ENCODE measurements at regions of chr6 and their contacts with region 1.

Region 1: DNA sequence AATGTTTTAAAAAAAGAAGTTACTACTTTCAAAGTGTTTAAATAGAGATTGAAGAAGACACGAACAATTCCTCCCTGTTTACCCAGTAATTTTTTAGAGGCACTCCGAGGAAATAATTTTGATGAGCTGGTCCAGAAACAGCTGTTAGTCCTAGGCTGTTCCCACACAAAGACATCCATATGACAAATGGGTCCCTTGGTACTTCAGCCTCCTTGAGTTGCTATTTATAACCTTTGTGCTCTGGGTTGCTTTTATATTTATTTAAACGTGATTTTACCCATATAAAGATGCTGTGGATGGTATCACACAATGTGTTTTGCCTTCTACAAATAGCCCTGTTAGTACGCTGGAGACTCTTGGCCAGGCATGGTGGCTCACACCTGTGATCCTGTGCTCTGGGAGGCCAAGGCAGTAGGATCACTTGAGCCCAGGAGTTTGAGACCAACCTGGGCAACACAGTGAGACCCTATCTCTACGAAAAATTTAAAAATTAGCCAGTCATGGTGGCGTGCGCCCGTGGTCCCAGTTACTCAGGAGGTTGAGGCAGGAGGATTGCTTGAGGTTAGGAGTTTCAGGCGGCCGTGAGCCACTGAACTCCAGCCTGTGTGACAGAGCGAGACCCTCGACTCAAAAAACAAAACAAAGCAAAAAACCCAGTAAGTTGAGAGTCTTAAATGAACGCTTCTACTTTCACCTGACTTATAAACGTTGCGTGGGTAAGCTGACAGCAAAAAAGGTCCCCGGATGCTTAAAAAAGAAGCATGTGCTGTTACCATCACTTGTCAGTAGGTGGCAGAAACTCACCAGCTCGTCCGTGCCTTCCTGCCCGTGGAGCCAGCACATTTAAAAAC is 56.9 kb upstream of the ARMH2 start:
- DNase-seq: peak; percentile 54
- H3K4me3 ChIP-seq: no peak overlapping the region
- H3K27ac ChIP-seq: no peak overlapping the region
- H3K4me1 ChIP-seq: peaks cover 25% of the 10 kb centered on the region
- H3K27me3 ChIP-seq: no peaks in the 10 kb centered on the region
- CTCF ChIP-seq: peak; percentile 75 to 86

Region 2: DNA sequence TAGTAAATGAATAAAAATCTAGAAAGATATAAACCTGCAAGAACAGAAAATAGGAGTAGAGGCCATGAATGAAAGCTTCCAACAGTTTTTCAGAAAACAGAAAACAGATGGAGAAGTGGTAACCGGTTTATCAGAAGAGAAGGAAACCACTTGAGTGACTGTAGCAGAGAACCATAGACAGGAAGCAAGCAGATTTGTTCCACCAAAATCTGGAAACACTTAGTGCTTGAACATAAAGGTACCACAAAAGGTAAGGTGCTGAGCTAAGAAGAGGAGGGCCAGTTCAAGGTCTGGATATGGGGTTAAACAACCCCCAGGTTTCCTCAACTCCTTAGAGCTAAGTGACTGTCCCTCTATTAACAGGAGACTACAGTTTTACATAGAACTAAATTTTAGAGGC is 200.4 kb before region 1 on chr6:
- CTCF ChIA-PET with region 1: no interaction called
- dilution Hi-C with region 1: no loop called
- in situ Hi-C with region 1: no loop called
- intact Hi-C with region 1: no loop called
- DNase-seq: no peak
- H3K4me3 ChIP-seq: no peak overlapping the region
- H3K27ac ChIP-seq: no peak overlapping the region
- H3K4me1 ChIP-seq: no peaks in the 10 kb centered on the region
- H3K27me3 ChIP-seq: no peaks in the 10 kb centered on the region
- CTCF ChIP-seq: no peak

Region 3: DNA sequence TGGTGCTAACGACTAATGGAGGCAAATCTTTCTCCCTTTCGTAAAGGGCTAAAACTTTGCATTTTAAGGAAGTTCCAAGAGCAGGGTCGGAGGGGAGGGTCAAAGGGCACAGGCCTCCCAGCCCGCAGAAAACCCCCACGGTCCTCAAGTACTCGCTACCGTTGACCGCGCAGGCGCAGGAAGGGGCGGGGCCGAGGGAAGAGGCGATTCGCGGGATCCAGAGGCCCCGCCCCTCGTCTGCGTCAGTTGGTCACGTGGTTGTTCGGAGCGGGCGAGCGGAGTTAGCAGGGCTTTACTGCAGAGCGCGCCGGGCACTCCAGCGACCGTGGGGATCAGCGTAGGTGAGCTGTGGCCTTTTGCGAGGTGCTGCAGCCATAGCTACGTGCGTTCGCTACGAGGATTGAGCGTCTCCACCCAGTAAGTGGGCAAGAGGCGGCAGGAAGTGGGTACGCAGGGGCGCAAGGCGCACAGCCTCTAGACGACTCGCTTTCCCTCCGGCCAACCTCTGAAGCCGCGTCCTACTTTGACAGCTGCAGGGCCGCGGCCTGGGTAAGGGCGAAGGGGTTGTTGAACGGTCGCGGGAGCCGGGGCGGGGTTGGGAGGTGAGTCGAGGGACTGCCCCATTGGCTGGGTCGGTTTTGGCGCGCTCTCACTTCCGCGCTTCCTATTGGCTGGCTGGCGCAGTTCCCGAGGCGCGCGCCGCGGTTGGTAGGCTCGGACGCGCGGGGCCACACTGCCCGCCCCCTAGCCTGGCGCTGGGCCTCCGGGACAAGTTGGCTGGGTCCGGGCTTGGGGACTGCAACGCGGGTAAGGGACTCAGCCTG is 80.7 kb before region 1 on chr6 and contains the start of gene GMNN:
- CTCF ChIA-PET with region 1: no interaction called
- dilution Hi-C with region 1: no loop called
- in situ Hi-C with region 1: no loop called
- intact Hi-C with region 1: loop called (anchors 2 kb)
- DNase-seq: peak; percentile 93
- H3K4me3 ChIP-seq: peak within 1 kb of the TSS; percentile 74 to 100 (median 100)
- H3K27ac ChIP-seq: peak within 1 kb of the TSS; percentile 93
- H3K4me1 ChIP-seq: peaks cover 5% of the 10 kb centered on the region
- H3K27me3 ChIP-seq: no peaks in the 10 kb centered on the region
- CTCF ChIP-seq: no peak
- total RNA-seq, gene GMNN: 8.0 to 36.3 TPM

Region 4: GRCh38 chr6:24902782-24903181 is 47.2 kb after region 1 on chr6:
- CTCF ChIA-PET with region 1: no interaction called
- dilution Hi-C with region 1: no loop called
- in situ Hi-C with region 1: no loop called
- intact Hi-C with region 1: no loop called
- DNase-seq: peak; percentile 41
- H3K4me3 ChIP-seq: no peak overlapping the region
- H3K27ac ChIP-seq: no peak overlapping the region
- H3K4me1 ChIP-seq: no peaks in the 10 kb centered on the region
- H3K27me3 ChIP-seq: no peaks in the 10 kb centered on the region
- CTCF ChIP-seq: no peak

Region 5: GRCh38 chr6:24933868-24934401 is 78.3 kb after region 1 on chr6:
- CTCF ChIA-PET with region 1: no interaction called
- dilution Hi-C with region 1: no loop called
- in situ Hi-C with region 1: no loop called
- intact Hi-C with region 1: loop called (anchors 1 kb)
- DNase-seq: no peak
- H3K4me3 ChIP-seq: no peak overlapping the region
- H3K27ac ChIP-seq: no peak overlapping the region
- H3K4me1 ChIP-seq: no peaks in the 10 kb centered on the region
- H3K27me3 ChIP-seq: no peaks in the 10 kb centered on the region
- CTCF ChIP-seq: peak; percentile 25 to 49

Region 6: DNA sequence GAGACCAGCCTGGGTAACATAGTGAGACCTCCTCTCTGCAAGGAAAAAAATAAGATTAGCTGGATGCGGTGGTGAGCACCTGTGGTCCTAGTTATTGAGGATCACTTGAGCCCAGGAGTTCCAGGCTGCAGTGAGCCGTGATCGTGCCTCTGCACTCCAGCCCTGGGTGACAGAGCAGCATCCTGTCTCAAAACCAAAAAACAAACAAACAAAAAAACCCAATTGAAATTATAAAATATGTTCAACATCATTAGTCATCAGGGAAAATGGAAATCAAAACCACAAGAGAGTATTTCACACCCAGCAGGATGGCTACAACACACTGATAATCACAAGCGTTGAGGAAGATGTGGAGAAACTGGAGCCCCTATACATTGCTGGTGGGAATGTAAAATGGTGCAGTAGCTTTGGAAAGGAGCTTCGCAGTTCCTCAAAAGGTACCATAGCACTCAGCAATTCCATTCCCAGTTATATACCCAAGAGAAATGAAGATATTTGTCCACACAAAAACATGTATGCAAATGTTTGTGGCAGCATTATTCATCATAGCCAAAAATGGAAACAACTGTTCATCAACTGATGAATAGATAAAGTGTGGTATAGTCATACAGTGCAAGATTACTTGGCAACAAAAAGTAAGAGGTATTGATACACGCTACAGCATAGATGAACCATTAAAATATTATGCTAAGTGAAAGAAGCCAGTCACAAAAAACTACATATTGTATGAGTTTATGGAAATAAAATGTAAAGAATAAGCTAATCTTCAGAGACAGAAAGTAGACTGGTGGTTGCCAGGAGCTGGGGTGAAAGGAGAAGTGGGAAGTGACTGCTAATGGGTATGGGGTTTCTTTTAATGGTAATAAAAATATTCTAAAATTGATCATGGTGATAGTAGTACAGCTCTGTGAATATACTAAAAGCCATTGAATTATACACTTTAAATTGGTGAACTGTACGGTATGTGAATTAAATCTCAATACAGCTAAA is 118.9 kb after region 1 on chr6:
- CTCF ChIA-PET with region 1: no interaction called
- dilution Hi-C with region 1: no loop called
- in situ Hi-C with region 1: no loop called
- intact Hi-C with region 1: no loop called
- DNase-seq: peak; percentile 25
- H3K4me3 ChIP-seq: no peak overlapping the region
- H3K27ac ChIP-seq: no peak overlapping the region
- H3K4me1 ChIP-seq: no peaks in the 10 kb centered on the region
- H3K27me3 ChIP-seq: no peaks in the 10 kb centered on the region
- CTCF ChIP-seq: no peak

Region 7: GRCh38 chr6:24991810-24992467 is 136.3 kb after region 1 on chr6:
- CTCF ChIA-PET with region 1: interaction called, 5 read pairs
- dilution Hi-C with region 1: no loop called
- in situ Hi-C with region 1: no loop called
- intact Hi-C with region 1: loop called (anchors 1 kb)
- DNase-seq: peak; percentile 38
- H3K4me3 ChIP-seq: no peak overlapping the region
- H3K27ac ChIP-seq: no peak overlapping the region
- H3K4me1 ChIP-seq: peaks cover 2% of the 10 kb centered on the region
- H3K27me3 ChIP-seq: no peaks in the 10 kb centered on the region
- CTCF ChIP-seq: peak; percentile 63 to 84

Region 8: GRCh38 chr6:25017932-25018567 is 162.4 kb after region 1 on chr6:
- CTCF ChIA-PET with region 1: interaction called, 25 read pairs
- dilution Hi-C with region 1: no loop called
- in situ Hi-C with region 1: loop called (anchors 5 kb)
- intact Hi-C with region 1: loop called (anchors 1 kb)
- DNase-seq: peak; percentile 78
- H3K4me3 ChIP-seq: peak overlapping the region in 1 of 3 experiments; percentile 2
- H3K27ac ChIP-seq: peak overlapping the region; percentile 72
- H3K4me1 ChIP-seq: peaks cover 44% of the 10 kb centered on the region
- H3K27me3 ChIP-seq: no peaks in the 10 kb centered on the region
- CTCF ChIP-seq: peak; percentile 90

Region 9: GRCh38 chr6:25601800-25602673 is 746.4 kb after region 1 on chr6:
- CTCF ChIA-PET with region 1: interaction called, 3 read pairs
- dilution Hi-C with region 1: no loop called
- in situ Hi-C with region 1: no loop called
- intact Hi-C with region 1: loop called (anchors 10 kb)
- DNase-seq: peak; percentile 12
- H3K4me3 ChIP-seq: no peak overlapping the region
- H3K27ac ChIP-seq: no peak overlapping the region
- H3K4me1 ChIP-seq: no peaks in the 10 kb centered on the region
- H3K27me3 ChIP-seq: no peaks in the 10 kb centered on the region
- CTCF ChIP-seq: peak; percentile 44 to 50